GM12878 (cell line): ENCODE measurements at regions of chr14 and their contacts with region 1.

Region 1: DNA sequence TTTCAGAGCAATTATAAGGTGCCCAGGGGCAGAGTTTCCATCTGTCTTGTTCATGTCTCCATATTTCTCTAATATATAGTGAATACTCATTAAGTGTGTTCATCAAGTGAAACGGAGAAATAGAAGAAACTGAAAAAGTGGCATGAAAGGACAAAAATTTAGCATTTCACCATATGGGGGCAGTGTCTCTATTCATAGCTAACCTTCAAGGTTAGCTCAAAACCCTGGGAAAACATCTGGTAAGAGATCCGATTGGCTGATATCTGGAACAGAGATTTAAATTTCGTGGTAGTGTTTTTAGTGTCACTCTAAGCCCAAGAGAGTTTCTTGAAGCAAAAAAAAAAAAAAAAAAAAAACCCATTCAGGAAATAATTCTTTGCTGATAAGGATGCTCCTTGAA is 367.5 kb downstream of the DAD1 start:
- DNase-seq: no peak
- ATAC-seq: peak; percentile 58
- H3K4me3 ChIP-seq: no peak overlapping the region
- H3K27ac ChIP-seq: no peak overlapping the region
- H3K4me1 ChIP-seq: no peaks in the 10 kb centered on the region
- H3K27me3 ChIP-seq: no peaks in the 10 kb centered on the region; a peak in 2 of 4 replicates
- CTCF ChIP-seq: peak; percentile 31 to 49 (median 43); a peak in 4 of 6 replicates
- EP300 ChIP-seq: no peak
- POLR2A ChIP-seq: no peak
- RAD21 ChIP-seq: peak; percentile 25; the same call in 1 of the 2 replicates

Region 2: GRCh38 chr14:22052795-22053194 is 168.7 kb before region 1 on chr14:
- CTCF ChIA-PET with region 1: no interaction called
- POLR2A ChIA-PET with region 1: no interaction called
- RAD21 ChIA-PET with region 1: no interaction called
- SMC1A ChIA-PET with region 1: no interaction called
- in situ Hi-C with region 1: no loop called
- intact Hi-C with region 1: no loop called
- DNase-seq: no peak
- ATAC-seq: no peak
- H3K4me3 ChIP-seq: no peak overlapping the region
- H3K27ac ChIP-seq: no peak overlapping the region
- H3K4me1 ChIP-seq: no peaks in the 10 kb centered on the region
- H3K27me3 ChIP-seq: no peaks in the 10 kb centered on the region
- CTCF ChIP-seq: no peak
- EP300 ChIP-seq: no peak
- POLR2A ChIP-seq: no peak
- RAD21 ChIP-seq: no peak

Region 3: DNA sequence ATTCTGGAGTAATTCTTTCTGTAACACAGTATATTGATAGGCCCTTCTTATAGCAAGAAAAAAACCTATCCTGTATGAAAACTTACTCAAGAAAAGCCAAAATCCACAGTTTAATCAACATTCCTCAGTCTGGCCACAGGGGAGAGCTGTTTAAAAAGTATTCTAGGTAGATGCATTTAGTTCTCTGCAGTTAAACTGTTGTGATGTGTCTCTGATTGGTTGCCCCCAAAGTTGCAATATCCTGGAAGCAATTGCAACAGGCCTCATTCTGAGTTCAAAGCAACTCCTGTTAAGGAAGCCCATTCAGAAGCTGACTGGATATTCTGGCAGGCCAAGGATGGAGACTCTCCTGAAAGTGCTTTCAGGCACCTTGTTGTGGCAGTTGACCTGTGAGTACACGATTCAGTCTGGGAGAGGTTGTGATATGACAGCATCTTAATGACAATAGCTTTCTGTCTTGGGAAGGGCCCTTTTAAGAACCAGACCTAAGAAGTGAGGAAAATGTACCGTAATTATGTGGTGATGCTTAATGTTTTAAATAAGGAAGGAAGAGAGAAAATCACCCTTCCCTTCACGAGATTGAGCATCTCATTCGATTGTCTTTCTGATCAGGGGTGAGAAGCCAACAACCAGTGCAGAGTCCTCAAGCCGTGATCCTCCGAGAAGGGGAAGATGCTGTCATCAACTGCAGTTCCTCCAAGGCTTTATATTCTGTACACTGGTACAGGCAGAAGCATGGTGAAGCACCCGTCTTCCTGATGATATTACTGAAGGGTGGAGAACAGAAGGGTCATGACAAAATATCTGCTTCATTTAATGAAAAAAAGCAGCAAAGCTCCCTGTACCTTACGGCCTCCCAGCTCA is 53.2 kb before region 1 on chr14:
- CTCF ChIA-PET with region 1: interaction called, 18 read pairs
- POLR2A ChIA-PET with region 1: no interaction called
- RAD21 ChIA-PET with region 1: interaction called, 10 read pairs
- SMC1A ChIA-PET with region 1: interaction called, 5 read pairs
- in situ Hi-C with region 1: no loop called
- intact Hi-C with region 1: no loop called
- DNase-seq: no peak
- ATAC-seq: peak; percentile 38; the same call in 1 of the 3 replicates
- H3K4me3 ChIP-seq: no peak overlapping the region
- H3K27ac ChIP-seq: no peak overlapping the region
- H3K4me1 ChIP-seq: no peaks in the 10 kb centered on the region
- H3K27me3 ChIP-seq: peaks cover 0 to 2% of the 10 kb centered on the region in 2 experiments; a peak in 1 of 4 replicates
- CTCF ChIP-seq: peak in 1 of 3 experiments; percentile 20; a peak in 2 of 6 replicates
- EP300 ChIP-seq: no peak
- POLR2A ChIP-seq: no peak
- RAD21 ChIP-seq: peak; percentile 23; the same call in 1 of the 2 replicates

Region 4: DNA sequence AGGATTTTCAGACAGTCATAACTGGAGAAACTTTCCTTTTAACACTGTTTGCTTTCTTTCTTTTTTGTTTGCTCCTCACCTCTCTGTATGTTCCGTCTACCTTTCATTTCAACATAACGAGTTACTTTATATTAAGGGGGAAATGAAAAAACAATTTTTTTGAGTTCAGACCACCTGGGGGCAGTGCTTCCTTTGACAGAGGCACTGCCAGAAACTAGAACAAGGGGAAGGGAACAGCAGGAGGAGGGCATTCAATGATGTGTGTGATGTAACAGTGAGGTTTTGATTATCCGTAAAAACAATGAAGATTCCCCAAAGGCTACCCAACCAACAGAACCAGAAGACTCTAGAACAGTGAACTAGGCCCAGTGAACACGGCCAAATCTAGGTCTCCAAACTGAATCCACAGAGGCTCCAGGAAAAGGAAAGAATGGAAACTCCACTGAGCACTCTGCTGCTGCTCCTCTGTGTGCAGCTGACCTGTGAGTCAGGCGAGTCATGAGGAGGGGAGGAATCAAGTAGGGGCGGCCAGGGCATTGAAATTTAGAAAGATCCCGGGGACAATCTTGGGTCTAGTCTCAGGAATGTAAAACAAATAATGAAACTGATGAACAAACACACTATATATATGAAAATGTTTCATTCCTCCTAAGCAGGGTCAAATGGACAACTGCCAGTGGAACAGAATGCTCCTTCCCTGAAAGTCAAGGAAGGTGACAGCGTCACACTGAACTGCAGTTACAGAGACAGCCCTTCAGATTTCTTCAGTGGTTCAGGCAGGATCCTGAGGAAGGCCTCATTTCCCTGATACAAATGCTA is 44.0 kb after region 1 on chr14:
- CTCF ChIA-PET with region 1: interaction called, 30 read pairs
- POLR2A ChIA-PET with region 1: no interaction called
- RAD21 ChIA-PET with region 1: interaction called, 4 read pairs
- SMC1A ChIA-PET with region 1: interaction called, 5 read pairs
- in situ Hi-C with region 1: no loop called
- intact Hi-C with region 1: no loop called
- DNase-seq: no peak
- ATAC-seq: peak; percentile 57
- H3K4me3 ChIP-seq: no peak overlapping the region
- H3K27ac ChIP-seq: no peak overlapping the region
- H3K4me1 ChIP-seq: no peaks in the 10 kb centered on the region; the same call in 1 of the 2 replicates
- H3K27me3 ChIP-seq: no peaks in the 10 kb centered on the region
- CTCF ChIP-seq: peak in 1 of 3 experiments; percentile 19; a peak in 2 of 6 replicates
- EP300 ChIP-seq: no peak
- POLR2A ChIP-seq: no peak
- RAD21 ChIP-seq: peak; percentile 32

Region 5: DNA sequence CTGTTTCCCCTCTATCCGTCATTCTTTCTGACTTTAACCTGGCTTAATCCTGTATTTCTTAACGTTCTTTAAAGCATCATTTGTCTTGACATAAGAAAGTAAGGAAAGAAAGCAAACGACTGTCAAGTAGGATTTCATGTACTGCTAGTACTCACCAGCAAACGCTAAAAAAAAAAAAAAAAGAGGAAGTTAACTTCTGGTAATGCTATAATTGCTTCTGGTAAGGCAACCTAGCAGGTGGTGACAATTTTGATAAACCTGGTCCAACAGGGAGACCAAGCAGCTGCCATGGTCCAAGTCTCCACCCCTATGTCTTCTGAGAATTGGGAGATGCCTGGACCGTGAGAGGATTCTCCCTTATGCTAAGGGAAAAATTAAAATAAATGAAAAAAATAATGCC is 60.9 kb after region 1 on chr14:
- CTCF ChIA-PET with region 1: interaction called, 16 read pairs
- POLR2A ChIA-PET with region 1: no interaction called
- RAD21 ChIA-PET with region 1: interaction called, 6 read pairs
- SMC1A ChIA-PET with region 1: interaction called, 10 read pairs
- in situ Hi-C with region 1: no loop called
- intact Hi-C with region 1: no loop called
- DNase-seq: no peak
- ATAC-seq: peak; percentile 93
- H3K4me3 ChIP-seq: no peak overlapping the region
- H3K27ac ChIP-seq: no peak overlapping the region
- H3K4me1 ChIP-seq: peaks cover 5% of the 10 kb centered on the region; the same call in 1 of the 2 replicates
- H3K27me3 ChIP-seq: peaks cover 0 to 3% of the 10 kb centered on the region in 2 experiments; a peak in 2 of 4 replicates
- CTCF ChIP-seq: no peak
- EP300 ChIP-seq: peak in 1 of 2 experiments; percentile 48; a peak in 1 of 4 replicates
- POLR2A ChIP-seq: no peak
- RAD21 ChIP-seq: no peak

Region 6: DNA sequence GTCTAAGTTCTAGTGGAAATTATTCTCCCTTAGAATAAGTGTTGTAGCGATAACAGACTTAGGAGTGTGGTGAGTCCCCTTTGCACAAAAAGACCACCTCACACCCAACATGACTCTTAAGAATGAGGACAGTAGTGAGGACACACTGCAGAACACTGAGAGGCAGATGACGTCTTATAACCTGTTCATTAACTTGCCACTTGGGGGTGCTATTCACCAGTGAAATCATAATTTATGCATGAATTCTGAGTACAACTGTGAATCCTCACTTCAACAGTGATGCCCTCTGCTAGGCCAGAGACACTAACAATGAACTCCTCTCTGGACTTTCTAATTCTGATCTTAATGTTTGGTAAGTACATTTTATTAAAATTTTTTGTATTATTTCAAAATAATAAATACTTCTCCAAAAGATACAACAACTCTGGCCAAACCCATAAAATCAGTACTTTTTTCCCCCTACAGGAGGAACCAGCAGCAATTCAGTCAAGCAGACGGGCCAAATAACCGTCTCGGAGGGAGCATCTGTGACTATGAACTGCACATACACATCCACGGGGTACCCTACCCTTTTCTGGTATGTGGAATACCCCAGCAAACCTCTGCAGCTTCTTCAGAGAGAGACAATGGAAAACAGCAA is 92.8 kb after region 1 on chr14:
- CTCF ChIA-PET with region 1: interaction called, 37 read pairs
- POLR2A ChIA-PET with region 1: no interaction called
- RAD21 ChIA-PET with region 1: interaction called, 13 read pairs
- SMC1A ChIA-PET with region 1: interaction called, 12 read pairs
- in situ Hi-C with region 1: no loop called
- intact Hi-C with region 1: loop called (anchors 5 kb)
- DNase-seq: peak; percentile 48
- ATAC-seq: peak; percentile 98
- H3K4me3 ChIP-seq: no peak overlapping the region
- H3K27ac ChIP-seq: no peak overlapping the region
- H3K4me1 ChIP-seq: no peaks in the 10 kb centered on the region
- H3K27me3 ChIP-seq: no peaks in the 10 kb centered on the region
- CTCF ChIP-seq: peak; percentile 55 to 80 (median 69); a peak in 5 of 6 replicates
- EP300 ChIP-seq: no peak
- POLR2A ChIP-seq: no peak
- RAD21 ChIP-seq: peak; percentile 75